ENCODE measurements at regions of chr15 and their contacts with region 1.

Region 1: DNA sequence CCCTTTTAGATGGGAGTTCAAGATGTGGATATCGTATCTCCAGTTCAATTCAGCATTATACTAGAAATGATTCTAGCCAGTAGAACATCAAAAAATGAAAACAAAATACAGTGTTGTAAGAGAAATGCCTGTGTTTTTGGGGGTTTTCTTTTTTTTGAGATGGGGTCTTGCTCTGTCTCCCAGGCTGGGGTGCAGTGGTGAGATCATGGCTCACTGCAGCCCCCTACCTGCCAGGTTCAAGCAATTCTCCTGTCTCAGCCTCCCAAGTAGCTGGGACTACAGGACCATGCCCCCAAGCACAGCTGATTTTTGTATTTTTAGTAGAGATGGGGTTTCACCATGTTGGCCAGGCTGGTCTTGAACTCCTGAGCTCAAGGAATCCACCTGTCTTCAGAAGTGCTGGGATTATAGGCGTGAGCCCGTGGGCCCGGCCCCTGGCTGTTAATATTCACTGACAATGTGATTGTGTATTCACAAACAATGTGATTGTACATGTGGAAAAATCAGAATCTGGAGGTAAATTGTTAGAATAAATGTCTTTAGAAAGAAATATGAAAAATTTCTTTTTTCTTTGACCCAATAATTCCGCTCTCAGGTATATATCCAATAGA is 59.0 kb downstream of the ARIH1 start:
- DNase-seq: no peak
- ATAC-seq: peak; percentile 56
- H3K4me3 Mint-ChIP-seq: no peak overlapping the region
- H3K27ac Mint-ChIP-seq: no peak overlapping the region
- H3K4me1 Mint-ChIP-seq: peaks cover 5% of the 10 kb centered on the region
- H3K27me3 Mint-ChIP-seq: no peaks in the 10 kb centered on the region
- CTCF ChIP-seq: no peak

Region 2: DNA sequence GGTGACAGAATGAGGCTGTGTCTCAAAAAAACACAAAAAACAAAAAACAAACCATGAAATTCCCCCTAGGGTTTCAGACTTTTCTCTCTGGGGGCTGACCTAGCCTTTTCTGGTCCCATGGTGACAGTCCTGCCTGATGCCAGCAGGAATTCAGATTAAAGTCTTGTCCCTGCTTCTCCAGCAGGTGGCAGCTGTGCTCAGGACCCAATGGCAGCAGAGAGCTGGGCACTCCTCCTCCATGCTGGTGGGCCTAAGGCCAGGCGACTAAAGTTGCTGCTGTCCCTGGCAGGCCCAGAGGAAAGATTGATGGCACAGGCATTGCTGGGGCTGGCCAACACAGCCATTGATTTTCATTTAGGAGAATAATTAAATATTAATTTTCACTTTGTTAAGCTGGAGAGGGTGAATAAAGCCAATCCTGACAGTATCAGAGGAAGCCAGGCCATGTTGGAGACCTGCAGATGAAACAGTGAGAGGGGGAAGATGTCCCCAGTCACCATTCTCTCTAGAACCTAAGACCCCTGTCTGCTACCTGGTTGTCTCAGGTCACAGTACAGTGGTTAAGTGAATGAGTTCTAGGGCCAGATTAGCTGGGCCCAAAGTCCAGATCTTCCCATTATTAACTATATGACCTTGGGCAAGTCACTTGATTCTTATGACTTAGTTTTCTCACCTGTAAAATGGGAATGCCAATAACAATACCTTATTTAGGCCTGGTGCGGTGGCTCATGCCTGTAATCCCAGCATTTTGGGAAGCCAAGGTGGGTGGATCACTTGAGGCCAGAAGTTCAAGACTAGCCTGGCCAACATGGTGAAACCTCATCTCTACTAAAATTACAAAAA is 220.3 kb before region 1 on chr15:
- CTCF ChIA-PET with region 1: interaction called, 20 read pairs
- POLR2A ChIA-PET with region 1: no interaction called
- intact Hi-C with region 1: loop called (anchors 1 kb)
- DNase-seq: peak; percentile 24
- ATAC-seq: peak; percentile 96
- H3K4me3 Mint-ChIP-seq: no peak overlapping the region
- H3K27ac Mint-ChIP-seq: no peak overlapping the region
- H3K4me1 Mint-ChIP-seq: no peaks in the 10 kb centered on the region
- H3K27me3 Mint-ChIP-seq: no peaks in the 10 kb centered on the region
- CTCF ChIP-seq: no peak

Region 3: DNA sequence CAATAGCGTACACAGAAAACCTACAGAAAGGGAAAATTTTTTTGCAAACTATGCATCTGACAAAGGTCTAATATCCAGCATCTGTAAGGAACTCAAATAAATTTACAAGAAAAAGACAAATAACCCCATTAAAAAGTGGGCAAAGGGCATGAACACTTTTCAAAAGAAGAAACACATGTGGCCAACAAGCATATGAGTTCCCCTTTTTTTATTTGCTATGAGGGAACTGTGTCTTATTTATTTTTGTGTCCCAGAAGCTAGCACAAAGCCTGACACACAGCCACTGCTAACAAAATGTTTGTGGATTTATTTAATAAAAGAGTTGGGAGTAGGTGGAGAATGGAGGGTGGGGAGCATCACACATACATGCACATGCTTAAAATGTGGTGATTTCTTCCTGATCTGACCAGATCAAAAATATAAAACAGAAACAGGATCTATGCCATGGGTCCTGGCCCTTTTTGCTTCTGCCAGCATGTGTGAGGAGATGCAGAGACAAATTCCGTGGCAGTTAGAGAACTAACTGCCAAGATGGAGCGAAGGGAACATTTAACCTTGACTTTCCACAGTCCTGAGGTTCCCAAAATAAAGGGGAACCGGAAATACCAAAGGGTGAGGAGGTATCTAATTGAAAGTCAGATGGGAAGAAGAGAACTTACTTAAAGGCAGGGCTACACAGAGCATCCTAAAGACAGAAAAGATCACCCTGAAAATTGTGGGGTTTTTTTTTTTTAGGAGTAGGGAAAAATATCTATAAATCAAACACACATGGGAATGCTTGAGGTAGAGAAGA is 135.1 kb before region 1 on chr15 and contains the start of gene TMEM202:
- CTCF ChIA-PET with region 1: no interaction called
- POLR2A ChIA-PET with region 1: no interaction called
- intact Hi-C with region 1: no loop called
- DNase-seq: no peak
- ATAC-seq: no peak
- H3K4me3 Mint-ChIP-seq: no peak within 1 kb of the TSS
- H3K27ac Mint-ChIP-seq: no peak within 1 kb of the TSS
- H3K4me1 Mint-ChIP-seq: no peaks in the 10 kb centered on the region
- H3K27me3 Mint-ChIP-seq: peaks cover 17% of the 10 kb centered on the region
- CTCF ChIP-seq: no peak
- total RNA-seq, gene TMEM202: not detected in 2 replicates

Region 4: DNA sequence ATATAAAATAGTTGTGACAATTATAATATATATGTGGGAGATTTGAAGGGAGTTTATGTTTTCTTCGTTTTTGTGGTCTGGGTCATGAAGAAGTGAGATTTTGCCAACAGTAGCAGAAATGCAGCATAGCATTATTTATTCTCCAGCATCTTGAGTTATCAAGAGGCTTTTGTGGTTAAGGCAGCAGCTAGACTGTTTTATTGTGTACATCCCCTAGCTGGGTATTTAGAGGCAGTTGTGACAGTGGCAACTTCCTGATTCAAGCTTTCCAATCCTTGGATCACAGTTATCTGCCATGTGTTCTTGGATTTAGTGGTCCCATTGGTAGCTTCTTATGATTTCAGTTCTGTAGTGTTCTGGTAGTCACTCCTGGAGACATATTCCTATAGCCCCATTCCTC is 29.9 kb before region 1 on chr15:
- CTCF ChIA-PET with region 1: no interaction called
- POLR2A ChIA-PET with region 1: no interaction called
- intact Hi-C with region 1: no loop called
- DNase-seq: no peak
- ATAC-seq: no peak
- H3K4me3 Mint-ChIP-seq: no peak overlapping the region
- H3K27ac Mint-ChIP-seq: no peak overlapping the region
- H3K4me1 Mint-ChIP-seq: peaks cover 44% of the 10 kb centered on the region
- H3K27me3 Mint-ChIP-seq: no peaks in the 10 kb centered on the region
- CTCF ChIP-seq: no peak